Upper lobe of right lung (tissue), 1 donor: ENCODE measurements at regions of chr1 and their contacts with region 1.

Region 1: GRCh38 chr1:150846473-150847146 is 29.8 kb downstream of the ARNT start:
- DNase-seq: no peak
- ATAC-seq: no peak
- H3K4me3 ChIP-seq: no peak overlapping the region
- H3K27ac ChIP-seq: no peak overlapping the region
- H3K4me1 ChIP-seq: no peaks in the 10 kb centered on the region
- H3K27me3 ChIP-seq: no peaks in the 10 kb centered on the region
- CTCF ChIP-seq: no peak

Region 2: GRCh38 chr1:150925816-150926741 is 79.5 kb after region 1 on chr1 and contains the start of gene SETDB1:
- intact Hi-C with region 1: loop called (anchors 10 kb)
- DNase-seq: peak; percentile 98
- ATAC-seq: peak; percentile 99
- H3K4me3 ChIP-seq: peak within 1 kb of the TSS; percentile 72
- H3K27ac ChIP-seq: peak within 1 kb of the TSS; percentile 86
- H3K4me1 ChIP-seq: peaks cover 15% of the 10 kb centered on the region
- H3K27me3 ChIP-seq: no peaks in the 10 kb centered on the region
- CTCF ChIP-seq: no peak
- total RNA-seq, gene SETDB1: 45.8 TPM